A673 (cell line): ENCODE measurements at regions of chr6 and their contacts with region 1.

Region 1: DNA sequence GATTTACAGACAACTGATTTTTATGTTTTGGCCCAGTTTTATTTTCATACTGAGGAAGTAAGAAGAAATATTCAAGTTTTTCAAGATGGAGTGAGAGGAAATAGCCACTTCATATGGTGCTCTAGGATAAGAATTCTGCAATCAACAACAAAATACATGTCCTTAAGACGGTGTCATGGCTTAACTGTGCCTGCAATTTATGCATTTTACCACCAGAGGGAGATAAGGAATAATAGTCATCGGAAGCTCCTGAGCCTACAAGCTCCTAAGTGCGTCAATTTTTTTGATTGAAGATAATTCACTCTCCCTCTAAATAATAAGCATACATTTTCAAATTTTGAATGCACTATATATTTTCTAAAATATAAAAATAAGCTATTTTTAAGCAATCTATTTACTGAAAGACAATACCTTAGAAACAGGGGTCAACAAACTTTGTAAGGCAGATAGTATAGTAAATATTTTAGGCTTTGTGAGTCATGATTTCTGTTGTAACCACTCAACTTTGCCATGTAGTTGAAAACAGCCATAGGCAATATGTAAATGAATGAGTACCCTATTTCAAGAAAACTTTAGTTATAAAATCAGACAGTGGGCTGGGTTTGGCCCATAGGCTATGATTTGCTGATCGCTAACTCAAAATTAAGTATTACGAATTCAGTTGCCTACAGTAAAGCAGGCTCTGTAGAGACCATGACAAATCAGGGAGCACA is 230.9 kb upstream of the DTNBP1 start:
- DNase-seq: peak; percentile 48
- H3K4me3 ChIP-seq: no peak overlapping the region
- H3K27ac ChIP-seq: no peak overlapping the region
- H3K4me1 ChIP-seq: no peaks in the 10 kb centered on the region
- H3K27me3 ChIP-seq: no peaks in the 10 kb centered on the region
- CTCF ChIP-seq: peak; percentile 58

Region 2: DNA sequence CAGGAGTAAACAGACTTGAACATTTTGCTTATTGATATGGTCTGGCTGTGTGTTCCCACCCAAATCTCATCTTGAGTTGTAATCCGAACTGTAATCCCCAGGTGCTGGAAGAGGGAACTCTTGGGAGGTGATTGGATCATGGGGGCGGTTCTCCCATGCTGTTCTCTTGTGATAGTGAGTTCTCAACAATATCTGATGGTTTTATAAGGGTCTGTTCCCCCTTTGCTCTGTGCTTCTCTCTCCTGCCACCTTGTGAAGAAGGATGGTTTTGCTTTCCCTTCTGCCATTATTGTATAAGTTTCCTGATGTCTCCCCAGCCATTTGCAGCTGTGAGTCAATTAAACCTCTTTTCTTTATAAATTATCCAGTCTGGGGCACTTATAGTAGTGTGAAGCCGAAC is 275.1 kb after region 1 on chr6:
- CTCF ChIA-PET with region 1: no interaction called
- POLR2A ChIA-PET with region 1: no interaction called
- intact Hi-C with region 1: loop called (anchors 10 kb)
- DNase-seq: peak; percentile 62
- H3K4me3 ChIP-seq: no peak overlapping the region
- H3K27ac ChIP-seq: no peak overlapping the region
- H3K4me1 ChIP-seq: peaks cover 4% of the 10 kb centered on the region
- H3K27me3 ChIP-seq: no peaks in the 10 kb centered on the region
- CTCF ChIP-seq: peak; percentile 69